Prostate gland (tissue), 2 donors: ENCODE measurements at regions of chr13 and their contacts with region 1.

Region 1: DNA sequence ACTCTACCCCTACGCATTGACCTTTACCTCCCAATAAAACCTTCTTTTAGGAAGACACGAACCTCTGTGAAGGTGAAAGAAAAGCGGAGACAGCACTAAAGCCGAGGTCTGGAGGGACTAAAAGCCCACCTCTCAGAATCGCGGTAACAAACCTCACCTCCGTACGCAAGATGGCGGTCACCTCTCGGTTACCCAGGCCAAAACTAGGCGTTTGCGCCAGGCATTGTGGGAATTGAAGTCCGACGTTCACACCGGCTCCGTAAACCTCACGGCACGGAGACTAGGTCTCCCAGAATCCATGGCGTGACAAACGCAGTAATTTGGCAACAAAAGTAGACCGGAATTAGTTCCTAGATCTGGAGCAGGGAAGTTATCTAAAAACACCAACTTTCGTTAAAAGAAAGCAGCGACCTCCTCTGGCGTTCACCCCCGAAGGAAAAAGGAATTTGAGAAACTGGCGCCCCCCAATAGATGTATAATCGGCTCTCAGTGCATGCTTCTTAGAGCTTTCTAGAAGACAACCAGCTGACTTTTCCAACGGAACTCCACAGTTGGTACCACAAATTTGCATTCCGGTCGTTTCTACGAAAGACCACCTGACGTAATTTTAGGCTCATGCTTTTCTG is at the start of gene N4BP2L2:
- DNase-seq: peak; percentile 96
- H3K4me3 ChIP-seq: peak within 1 kb of the TSS; percentile 53 to 68
- H3K27ac ChIP-seq: peak within 1 kb of the TSS; percentile 89 to 95
- H3K4me1 ChIP-seq: no peaks in the 10 kb centered on the region
- H3K27me3 ChIP-seq: no peaks in the 10 kb centered on the region
- CTCF ChIP-seq: peak in 3 of 4 experiments; percentile 7 to 31 (median 20)
- POLR2A ChIP-seq: peak; percentile 65
- total RNA-seq, gene N4BP2L2: 80.9 to 475 TPM

Region 2: GRCh38 chr13:32315238-32316027 is 223.3 kb before region 1 on chr13 and contains the starts of genes BRCA2 and ZAR1L:
- intact Hi-C with region 1: loop called (anchors 10 kb)
- DNase-seq: peak; percentile 82
- H3K4me3 ChIP-seq: peak within 1 kb of the TSS; percentile 50 to 61
- H3K27ac ChIP-seq: peak within 1 kb of the TSS; percentile 86 to 90
- H3K4me1 ChIP-seq: no peaks in the 10 kb centered on the region
- H3K27me3 ChIP-seq: no peaks in the 10 kb centered on the region
- CTCF ChIP-seq: peak in 1 of 4 experiments; percentile 26
- POLR2A ChIP-seq: peak; percentile 83
- total RNA-seq, gene BRCA2: 1.8 to 6.6 TPM
- total RNA-seq, gene ZAR1L: not detected

Region 3: DNA sequence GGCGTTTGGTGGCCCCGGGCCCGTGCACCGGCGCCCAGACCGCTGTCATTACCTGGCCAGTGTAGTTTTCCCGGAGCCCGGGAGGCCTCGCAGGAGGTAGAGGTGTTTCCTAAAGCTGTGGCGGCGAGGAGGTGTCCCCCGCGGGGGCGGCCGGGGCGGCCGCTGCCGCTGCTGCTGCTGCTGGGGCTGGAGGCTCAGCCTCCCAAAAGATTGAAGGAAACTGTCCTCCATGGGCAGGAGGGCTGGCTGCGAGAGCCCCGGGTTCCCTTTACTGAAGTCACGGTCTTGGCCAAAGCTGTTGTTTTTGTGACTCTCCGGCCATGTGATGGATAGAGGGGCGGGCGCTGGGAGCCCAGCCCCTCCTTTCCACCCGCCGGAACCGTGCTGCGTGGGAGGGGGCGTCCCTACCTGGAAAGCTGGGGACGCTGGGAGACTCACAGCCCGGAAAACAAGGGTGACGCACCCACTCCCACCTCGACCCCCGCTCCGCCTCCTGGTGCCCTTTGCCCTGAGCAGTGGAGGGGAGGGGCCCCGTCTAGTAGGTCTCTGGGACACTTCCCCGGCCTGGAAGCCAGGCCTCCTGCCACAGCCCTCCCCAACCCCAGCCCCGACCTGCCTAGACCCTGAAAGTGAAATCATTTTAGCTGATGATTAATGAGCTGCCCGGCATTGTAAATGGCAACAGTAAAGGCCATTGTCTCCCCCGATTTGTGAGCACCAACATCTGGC is 110.7 kb before region 1 on chr13 and contains the start of gene N4BP2L1:
- intact Hi-C with region 1: loop called (anchors 2 kb)
- DNase-seq: peak; percentile 80
- H3K4me3 ChIP-seq: peak within 1 kb of the TSS; percentile 69 to 85
- H3K27ac ChIP-seq: peak within 1 kb of the TSS; percentile 89 to 92
- H3K4me1 ChIP-seq: no peaks in the 10 kb centered on the region
- H3K27me3 ChIP-seq: no peaks in the 10 kb centered on the region
- CTCF ChIP-seq: no peak
- POLR2A ChIP-seq: peak; percentile 97
- total RNA-seq, gene N4BP2L1: 20.9 to 22.7 TPM